ENCODE measurements at regions of chr4 and their contacts with region 1.

Region 1: GRCh38 chr4:82462415-82462831 is 32.0 kb downstream of the ENOPH1 start:
- DNase-seq: peak; percentile 86
- ATAC-seq: peak; percentile 92
- H3K4me3 ChIP-seq: no peak overlapping the region
- H3K27ac ChIP-seq: no peak overlapping the region
- H3K4me1 ChIP-seq: no peaks in the 10 kb centered on the region
- H3K27me3 ChIP-seq: no peaks in the 10 kb centered on the region
- CTCF ChIP-seq: peak; percentile 81
- POLR2A ChIP-seq: no peak
- RAD21 ChIP-seq: peak; percentile 80

Region 2: DNA sequence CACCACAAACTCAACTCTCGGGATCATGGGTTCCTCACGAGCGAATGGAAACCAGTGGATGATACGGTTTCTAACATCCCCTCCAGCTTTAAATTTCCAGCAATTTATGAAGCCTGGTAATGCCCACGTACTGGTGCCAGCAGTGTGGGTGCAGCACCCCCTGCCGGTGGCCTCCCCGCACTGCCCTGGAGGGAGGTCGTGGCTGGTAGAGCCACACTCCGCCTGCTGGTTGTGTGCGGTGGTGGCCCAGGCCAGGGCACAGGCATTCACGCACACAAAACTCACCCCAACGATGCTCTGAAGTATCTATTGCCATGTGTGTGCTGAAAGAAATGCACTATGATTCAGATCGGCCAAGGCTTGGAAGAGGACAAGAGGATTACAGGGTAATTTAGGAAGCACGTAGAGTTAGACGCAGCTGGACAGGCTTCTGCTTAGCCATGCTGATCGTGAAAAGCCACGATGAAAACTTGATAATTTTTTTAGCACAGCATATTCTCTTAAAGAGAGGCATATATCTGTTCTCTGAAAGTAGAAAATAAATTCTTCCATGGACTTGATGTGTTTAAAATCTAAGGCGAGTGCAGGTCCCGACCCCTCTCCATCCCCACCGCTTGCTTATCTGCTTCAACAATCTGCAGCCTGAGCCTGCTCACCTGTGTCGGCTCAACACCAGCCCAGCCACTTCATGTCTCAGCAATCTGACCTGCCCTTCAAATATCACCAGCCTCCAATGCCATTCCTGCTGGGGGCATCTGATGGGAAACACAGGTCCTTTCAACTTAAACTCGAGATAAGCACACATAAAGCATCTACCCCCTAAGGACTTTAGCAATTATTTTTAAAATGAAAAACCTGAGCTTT is 277.1 kb after region 1 on chr4:
- CTCF ChIA-PET with region 1: interaction called, 6 read pairs
- POLR2A ChIA-PET with region 1: interaction called, 4 read pairs
- dilution Hi-C with region 1: no loop called
- in situ Hi-C with region 1: loop called (anchors 5 kb)
- intact Hi-C with region 1: loop called (anchors 1 kb)
- DNase-seq: peak; percentile 40
- ATAC-seq: peak; percentile 86
- H3K4me3 ChIP-seq: no peak overlapping the region
- H3K27ac ChIP-seq: no peak overlapping the region
- H3K4me1 ChIP-seq: 0 out of 2 replicates have a peak, but pooled peaks cover 2% of the 10 kb centered on the region
- H3K27me3 ChIP-seq: no peaks in the 10 kb centered on the region
- CTCF ChIP-seq: peak; percentile 96
- POLR2A ChIP-seq: 0 out of 2 replicates have a peak, but pooled peaks have one; percentile 26
- RAD21 ChIP-seq: peak; percentile 87

Region 3: GRCh38 chr4:82823062-82823461 is 360.6 kb after region 1 on chr4:
- CTCF ChIA-PET with region 1: no interaction called
- POLR2A ChIA-PET with region 1: interaction called, 3 read pairs
- dilution Hi-C with region 1: no loop called
- in situ Hi-C with region 1: loop called (anchors 10 kb)
- intact Hi-C with region 1: no loop called
- DNase-seq: peak; percentile 84
- ATAC-seq: peak; percentile 76
- H3K4me3 ChIP-seq: no peak overlapping the region
- H3K27ac ChIP-seq: no peak overlapping the region
- H3K4me1 ChIP-seq: peaks cover 7% of the 10 kb centered on the region
- H3K27me3 ChIP-seq: no peaks in the 10 kb centered on the region
- CTCF ChIP-seq: no peak
- POLR2A ChIP-seq: no peak
- RAD21 ChIP-seq: no peak

Region 4: DNA sequence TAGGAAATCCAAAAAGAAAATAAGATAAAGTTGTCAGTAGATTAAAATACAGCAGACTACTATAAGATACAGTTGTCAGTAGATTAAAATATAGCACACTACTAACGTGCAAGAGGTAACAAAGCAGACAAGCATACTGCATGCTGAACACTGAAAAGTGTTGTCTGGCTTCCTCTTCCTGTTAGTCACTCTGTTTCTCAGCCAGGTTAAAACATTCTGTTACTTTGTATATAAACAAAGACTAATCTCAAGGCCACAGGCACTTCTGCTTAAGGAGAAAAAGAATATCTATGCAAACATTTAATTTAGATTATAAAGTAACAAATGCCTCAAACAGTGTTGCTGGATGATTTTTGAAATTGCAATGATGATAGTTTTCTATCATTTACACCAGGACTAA is 377.2 kb after region 1 on chr4:
- CTCF ChIA-PET with region 1: no interaction called
- POLR2A ChIA-PET with region 1: no interaction called
- dilution Hi-C with region 1: no loop called
- in situ Hi-C with region 1: no loop called
- intact Hi-C with region 1: loop called (anchors 1 kb)
- DNase-seq: peak; percentile 69
- ATAC-seq: peak; percentile 71
- H3K4me3 ChIP-seq: no peak overlapping the region
- H3K27ac ChIP-seq: no peak overlapping the region
- H3K4me1 ChIP-seq: peaks cover 3% of the 10 kb centered on the region
- H3K27me3 ChIP-seq: no peaks in the 10 kb centered on the region
- CTCF ChIP-seq: no peak
- POLR2A ChIP-seq: no peak
- RAD21 ChIP-seq: no peak

Region 5: GRCh38 chr4:83012687-83013419 is 550.4 kb after region 1 on chr4:
- CTCF ChIA-PET with region 1: no interaction called
- POLR2A ChIA-PET with region 1: no interaction called
- dilution Hi-C with region 1: no loop called
- in situ Hi-C with region 1: no loop called
- intact Hi-C with region 1: loop called (anchors 1 kb)
- DNase-seq: peak; percentile 97
- ATAC-seq: peak; percentile 95
- H3K4me3 ChIP-seq: peak overlapping the region; percentile 70
- H3K27ac ChIP-seq: peak overlapping the region; percentile 75
- H3K4me1 ChIP-seq: no peaks in the 10 kb centered on the region; the same call in 1 of the 2 replicates
- H3K27me3 ChIP-seq: no peaks in the 10 kb centered on the region
- CTCF ChIP-seq: peak; percentile 52
- POLR2A ChIP-seq: peak; percentile 68
- RAD21 ChIP-seq: peak; percentile 44

Region 6: DNA sequence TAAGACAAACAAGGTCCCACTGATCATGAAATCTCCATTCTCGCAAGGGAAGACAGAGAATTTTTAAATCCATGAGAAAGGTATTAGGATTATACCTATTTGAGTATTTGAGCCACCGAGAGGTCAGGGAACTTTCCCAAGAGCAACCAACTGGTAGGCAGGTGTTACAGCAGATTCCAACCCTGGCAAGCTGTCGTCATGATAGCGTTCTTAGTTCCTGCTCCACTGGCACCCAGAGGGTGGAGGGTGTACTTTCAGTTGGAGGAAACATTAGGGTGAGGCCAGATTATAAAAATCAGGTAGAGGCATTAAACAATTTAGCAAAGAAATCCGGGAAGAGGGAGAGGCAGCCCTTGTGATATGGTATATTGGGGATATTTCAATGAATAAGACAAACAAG is 798.9 kb after region 1 on chr4:
- CTCF ChIA-PET with region 1: no interaction called
- POLR2A ChIA-PET with region 1: no interaction called
- dilution Hi-C with region 1: no loop called
- in situ Hi-C with region 1: no loop called
- intact Hi-C with region 1: loop called (anchors 5 kb)
- DNase-seq: no peak
- ATAC-seq: no peak
- H3K4me3 ChIP-seq: no peak overlapping the region
- H3K27ac ChIP-seq: no peak overlapping the region
- H3K4me1 ChIP-seq: peaks cover 8% of the 10 kb centered on the region
- H3K27me3 ChIP-seq: no peaks in the 10 kb centered on the region
- CTCF ChIP-seq: no peak
- POLR2A ChIP-seq: no peak
- RAD21 ChIP-seq: no peak

Region 7: DNA sequence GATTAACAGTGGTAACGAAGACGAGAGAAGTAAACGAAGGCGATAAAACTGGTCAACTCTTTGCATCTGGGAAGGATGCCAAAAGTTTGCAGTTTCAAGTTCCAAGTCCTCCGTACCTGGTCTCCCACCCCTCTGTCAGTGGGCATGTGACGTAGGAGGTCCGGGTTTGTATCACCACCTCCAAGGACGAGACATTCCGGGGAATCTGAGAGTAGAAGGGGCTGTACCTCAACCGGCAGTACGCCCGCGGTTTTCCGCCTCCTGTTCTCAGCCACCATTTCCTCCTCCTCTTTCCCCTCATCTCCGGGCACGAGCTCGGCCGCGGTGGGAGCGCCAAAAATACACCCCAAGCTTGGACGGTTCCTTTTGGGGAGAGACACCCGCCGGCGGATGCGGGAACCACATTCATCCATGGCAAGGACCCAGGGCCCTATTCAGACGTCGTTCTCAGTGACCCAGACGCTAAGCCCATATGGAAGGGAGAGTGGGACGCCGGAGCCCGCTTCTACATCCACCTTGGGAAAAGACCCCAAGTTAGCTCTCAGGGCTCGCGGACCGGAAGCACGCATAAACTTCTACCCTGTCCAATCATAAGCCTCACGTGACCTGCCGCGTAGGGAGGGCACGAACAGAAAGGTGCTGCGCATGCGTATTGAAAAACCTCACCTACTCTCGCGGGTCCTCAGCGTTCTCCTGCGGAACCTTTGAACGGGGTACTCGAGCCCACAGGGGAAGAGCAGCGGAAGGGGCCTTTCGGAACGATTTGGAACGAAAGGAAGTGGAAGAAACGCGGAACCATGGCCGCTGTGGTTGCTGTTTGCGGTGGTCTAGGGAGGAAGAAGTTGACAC is 993.1 kb after region 1 on chr4 and contains the starts of genes HELQ and MRPS18C:
- CTCF ChIA-PET with region 1: no interaction called
- POLR2A ChIA-PET with region 1: no interaction called
- dilution Hi-C with region 1: no loop called
- in situ Hi-C with region 1: no loop called
- intact Hi-C with region 1: loop called (anchors 10 kb)
- DNase-seq: peak; percentile 99
- ATAC-seq: peak; percentile 96
- H3K4me3 ChIP-seq: peak within 1 kb of the TSS; percentile 67
- H3K27ac ChIP-seq: peak within 1 kb of the TSS; percentile 78
- H3K4me1 ChIP-seq: no peaks in the 10 kb centered on the region
- H3K27me3 ChIP-seq: no peaks in the 10 kb centered on the region
- CTCF ChIP-seq: peak; percentile 22; the same call in 1 of the 2 replicates
- POLR2A ChIP-seq: peak; percentile 97
- RAD21 ChIP-seq: no peak
- total RNA-seq, gene HELQ: 9.1 and 13.1 TPM in 2 replicates
- total RNA-seq, gene MRPS18C: 8.6 and 23.9 TPM in 2 replicates

Measured in IMR-90 (cell line).